Caco-2 (cell line): ENCODE measurements at regions of chr5 and their contacts with region 1.

Region 1: GRCh38 chr5:41940641-41941040 is 15.6 kb downstream of the FBXO4 start:
- DNase-seq: no peak
- H3K4me3 ChIP-seq: no peak overlapping the region
- H3K4me3 Mint-ChIP-seq: no peak overlapping the region
- H3K27ac Mint-ChIP-seq: no peak overlapping the region
- H3K4me1 ChIP-seq: no peaks in the 10 kb centered on the region
- H3K4me1 Mint-ChIP-seq: no peaks in the 10 kb centered on the region
- H3K27me3 ChIP-seq: no peaks in the 10 kb centered on the region
- H3K27me3 Mint-ChIP-seq: no peaks in the 10 kb centered on the region
- CTCF ChIP-seq: no peak

Region 2: DNA sequence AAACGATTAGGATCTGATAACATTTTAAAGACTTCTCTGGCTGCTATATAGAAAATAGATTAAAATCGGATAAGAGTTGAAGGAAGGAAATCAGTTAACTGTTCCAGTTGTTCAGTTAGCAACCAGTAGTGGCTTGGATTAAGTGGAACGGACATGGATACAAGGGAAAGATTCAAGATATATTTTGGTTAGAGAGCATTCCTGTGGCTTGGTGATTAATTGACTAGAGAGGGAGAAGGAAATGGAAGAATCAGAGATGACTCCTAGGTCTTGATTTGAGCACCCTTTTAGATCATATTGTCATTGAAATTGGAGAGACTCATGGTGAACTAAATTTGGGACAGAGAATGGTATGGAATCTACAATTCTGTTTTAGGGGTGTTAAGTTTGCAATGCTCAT is 80.5 kb after region 1 on chr5:
- CTCF ChIA-PET with region 1: no interaction called
- POLR2A ChIA-PET with region 1: no interaction called
- intact Hi-C with region 1: loop called (anchors 1 kb)
- DNase-seq: no peak
- H3K4me3 ChIP-seq: no peak overlapping the region
- H3K4me3 Mint-ChIP-seq: no peak overlapping the region
- H3K27ac Mint-ChIP-seq: no peak overlapping the region
- H3K4me1 ChIP-seq: no peaks in the 10 kb centered on the region
- H3K4me1 Mint-ChIP-seq: peaks cover 5% of the 10 kb centered on the region
- H3K27me3 ChIP-seq: no peaks in the 10 kb centered on the region
- H3K27me3 Mint-ChIP-seq: peaks cover 4% of the 10 kb centered on the region
- CTCF ChIP-seq: no peak